ENCODE measurements at regions of chr12 and their contacts with region 1.

Region 1: GRCh38 chr12:47715393-47715876 is 9.6 kb upstream of the RPAP3 start:
- DNase-seq: peak; percentile 64 to 92 (median 86)
- H3K4me3 ChIP-seq: peak overlapping the region in 6 of 59 donors; percentile 4 to 23 (median 6)
- H3K27ac ChIP-seq: peak overlapping the region in 30 of 59 donors; percentile 1 to 93 (median 51)
- H3K27me3 ChIP-seq: no peaks in the 10 kb centered on the region
- CTCF ChIP-seq: peak; percentile 72 to 97 (median 89)

Region 2: GRCh38 chr12:47758834-47759690 is 43.6 kb after region 1 on chr12 and contains the start of gene RAPGEF3:
- intact Hi-C with region 1: loop called in 1 of 2 experiments (anchors 1 kb)
- DNase-seq: peak; percentile 69 to 93 (median 88)
- H3K4me3 ChIP-seq: peak within 1 kb of the TSS; percentile 46 to 91 (median 73)
- H3K27ac ChIP-seq: peak within 1 kb of the TSS; percentile 74 to 97 (median 95)
- H3K27me3 ChIP-seq: no peaks in the 10 kb centered on the region
- CTCF ChIP-seq: peak in 55 of 56 donors; percentile 31 to 78 (median 57)
- total RNA-seq, gene RAPGEF3: 33.3 to 206 (median 93.7) TPM

Region 3: GRCh38 chr12:47767216-47767724 is 51.8 kb after region 1 on chr12:
- intact Hi-C with region 1: loop called in 1 of 2 experiments (anchors 2 kb)
- DNase-seq: peak in 2 of 10 donors; percentile 42 to 54
- H3K4me3 ChIP-seq: no peak overlapping the region
- H3K27ac ChIP-seq: peak overlapping the region in 8 of 59 donors; percentile 15 to 82 (median 36)
- H3K27me3 ChIP-seq: no peaks in the 10 kb centered on the region
- CTCF ChIP-seq: peak; percentile 39 to 81 (median 64)

Region 4: GRCh38 chr12:47837190-47838171 is 122.0 kb after region 1 on chr12:
- intact Hi-C with region 1: loop called (anchors 2 kb)
- DNase-seq: peak in 9 of 10 donors; percentile 60 to 79 (median 65)
- H3K4me3 ChIP-seq: no peak overlapping the region
- H3K27ac ChIP-seq: peak overlapping the region in 4 of 59 donors; percentile 20 to 51 (median 40)
- H3K27me3 ChIP-seq: no peaks in the 10 kb centered on the region
- CTCF ChIP-seq: peak; percentile 84 to 99 (median 93)

Region 5: GRCh38 chr12:47949441-47950308 is 234.2 kb after region 1 on chr12:
- intact Hi-C with region 1: loop called in 1 of 2 experiments (anchors 10 kb)
- DNase-seq: peak in 8 of 10 donors; percentile 41 to 70 (median 46)
- H3K4me3 ChIP-seq: no peak overlapping the region
- H3K27ac ChIP-seq: no peak overlapping the region
- H3K27me3 ChIP-seq: peaks cover 0 to 35% (median 0%) of the 10 kb centered on the region in 45 donors
- CTCF ChIP-seq: peak; percentile 19 to 77 (median 67)

Region 6: GRCh38 chr12:47963340-47964040 is 248.1 kb after region 1 on chr12 and contains the start of gene TMEM106C:
- intact Hi-C with region 1: loop called in 1 of 2 experiments (anchors 5 kb)
- DNase-seq: peak; percentile 75 to 91 (median 86)
- H3K4me3 ChIP-seq: peak within 1 kb of the TSS; percentile 48 to 98 (median 85)
- H3K27ac ChIP-seq: peak within 1 kb of the TSS in 13 of 59 donors; percentile 6 to 83 (median 39)
- H3K27me3 ChIP-seq: peaks cover 0 to 19% (median 0%) of the 10 kb centered on the region in 45 donors
- CTCF ChIP-seq: peak; percentile 84 to 99 (median 96)
- total RNA-seq, gene TMEM106C: 21.4 to 75.3 (median 46.1) TPM

Measured in dorsolateral prefrontal cortex (tissue), 120 donors.